Activated CD4-positive, alpha-beta memory T cell treated with anti-CD3 and anti-CD28 coated beads for 36 hours (primary cell): ENCODE measurements at regions of chr6 and their contacts with region 1.

Region 1: GRCh38 chr6:111483736-111484632 is 966 bp upstream of the REV3L start:
- DNase-seq: peak; percentile 92
- H3K4me3 Mint-ChIP-seq: peak overlapping the region; percentile 97
- H3K27ac Mint-ChIP-seq: peak overlapping the region; percentile 99
- H3K4me1 Mint-ChIP-seq: peaks cover 56% of the 10 kb centered on the region
- H3K27me3 Mint-ChIP-seq: no peaks in the 10 kb centered on the region

Region 2: GRCh38 chr6:110873981-110874879 is 609.8 kb before region 1 on chr6 and contains the start of gene AMD1:
- CTCF ChIA-PET with region 1: interaction called, 3 read pairs
- POLR2A ChIA-PET with region 1: no interaction called
- intact Hi-C with region 1: loop called (anchors 2 kb)
- DNase-seq: peak; percentile 96
- H3K4me3 Mint-ChIP-seq: peak within 1 kb of the TSS; percentile 96
- H3K27ac Mint-ChIP-seq: peak within 1 kb of the TSS; percentile 97
- H3K4me1 Mint-ChIP-seq: peaks cover 27% of the 10 kb centered on the region
- H3K27me3 Mint-ChIP-seq: no peaks in the 10 kb centered on the region
- total RNA-seq, gene AMD1: 79.1 to 84.3 TPM

Region 3: GRCh38 chr6:111259089-111259831 is 224.7 kb before region 1 on chr6:
- CTCF ChIA-PET with region 1: interaction called, 52 read pairs
- POLR2A ChIA-PET with region 1: interaction called, 24 read pairs
- intact Hi-C with region 1: loop called (anchors 1 kb)
- DNase-seq: peak; percentile 99
- H3K4me3 Mint-ChIP-seq: peak overlapping the region; percentile 76
- H3K27ac Mint-ChIP-seq: peak overlapping the region; percentile 79
- H3K4me1 Mint-ChIP-seq: peaks cover 31% of the 10 kb centered on the region
- H3K27me3 Mint-ChIP-seq: peaks cover 2% of the 10 kb centered on the region

Region 4: DNA sequence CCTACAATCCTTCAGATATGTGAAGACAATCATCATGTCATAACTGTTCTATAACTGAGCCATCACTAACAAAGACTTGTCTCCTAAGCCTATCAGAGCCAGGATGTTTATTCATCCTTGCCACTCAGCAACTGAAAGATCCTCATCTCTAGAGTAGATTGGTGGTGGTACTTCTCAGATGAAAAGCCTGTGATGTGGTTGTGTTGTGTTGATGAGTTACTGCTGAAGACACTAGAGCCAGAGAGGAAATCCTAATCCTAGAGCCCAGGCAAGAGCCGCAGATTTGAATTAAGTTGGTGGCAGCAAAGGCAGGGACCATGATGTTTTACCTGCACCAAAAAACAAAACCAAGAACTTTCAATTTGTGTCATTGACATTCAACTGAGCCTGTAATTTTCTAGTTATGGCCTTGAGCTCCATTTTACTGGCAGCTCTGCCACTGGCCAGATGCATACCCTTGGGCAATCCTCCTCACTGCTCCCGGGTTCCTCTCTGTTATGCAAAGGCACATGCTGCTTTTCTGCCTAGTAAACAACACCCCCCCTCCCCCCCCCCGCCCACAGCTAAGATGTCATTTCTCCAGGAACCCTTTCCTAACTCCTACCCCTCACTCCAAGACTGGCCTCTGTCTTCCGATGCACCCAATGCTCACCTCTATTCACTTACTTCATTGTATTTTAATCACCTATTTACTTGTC is 49.3 kb after region 1 on chr6:
- CTCF ChIA-PET with region 1: no interaction called
- POLR2A ChIA-PET with region 1: no interaction called
- intact Hi-C with region 1: loop called (anchors 1 kb)
- DNase-seq: peak; percentile 71
- H3K4me3 Mint-ChIP-seq: no peak overlapping the region
- H3K27ac Mint-ChIP-seq: peak overlapping the region; percentile 6
- H3K4me1 Mint-ChIP-seq: peaks cover 26% of the 10 kb centered on the region
- H3K27me3 Mint-ChIP-seq: no peaks in the 10 kb centered on the region

Region 5: GRCh38 chr6:111757342-111757741 is 273.4 kb after region 1 on chr6:
- CTCF ChIA-PET with region 1: no interaction called
- POLR2A ChIA-PET with region 1: interaction called, 3 read pairs
- intact Hi-C with region 1: loop called (anchors 2 kb)
- DNase-seq: peak; percentile 53
- H3K4me3 Mint-ChIP-seq: peak overlapping the region; percentile 84
- H3K27ac Mint-ChIP-seq: peak overlapping the region; percentile 95
- H3K4me1 Mint-ChIP-seq: peaks cover 86% of the 10 kb centered on the region
- H3K27me3 Mint-ChIP-seq: no peaks in the 10 kb centered on the region

Region 6: DNA sequence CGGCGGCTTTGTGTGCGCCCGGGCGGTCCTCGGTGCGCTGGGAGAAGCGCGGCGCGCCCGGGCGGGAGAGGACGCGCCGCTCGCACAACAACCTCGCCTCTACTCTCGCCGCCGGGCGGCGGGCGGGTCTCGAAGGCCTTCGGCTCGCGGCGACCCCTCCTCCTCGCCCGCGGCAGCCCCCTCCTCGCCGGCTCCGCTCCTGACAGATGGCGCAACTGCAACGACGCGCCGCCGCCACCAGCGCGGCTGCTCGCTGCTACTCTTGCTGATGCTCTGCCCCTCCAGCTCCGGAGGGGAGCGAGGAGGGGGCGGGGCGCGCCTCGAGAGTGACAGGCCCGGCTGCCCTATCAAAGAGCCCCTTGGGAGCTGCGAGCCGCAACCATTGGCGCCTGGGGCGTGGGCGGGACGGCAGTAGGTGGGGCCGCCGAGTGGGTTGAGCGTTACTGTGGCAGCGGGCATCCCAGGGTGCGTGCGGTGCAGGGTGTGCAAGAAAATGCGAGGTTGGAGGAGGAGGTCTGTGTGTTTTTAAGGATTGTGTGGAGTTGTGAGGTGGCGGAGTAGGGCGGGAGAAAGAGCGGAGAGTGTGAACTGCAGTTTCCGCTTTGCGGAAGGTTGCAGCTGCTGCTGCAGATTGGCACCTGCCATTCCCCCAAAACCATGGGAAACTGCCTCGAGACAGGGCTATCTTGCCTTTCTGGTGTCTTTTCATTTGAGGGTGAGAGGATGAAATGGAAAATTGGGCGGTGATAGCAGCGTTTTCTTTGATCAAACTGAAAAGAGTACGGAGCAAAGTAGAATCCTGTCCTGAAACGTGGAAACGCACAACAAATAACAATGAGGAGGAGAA is 389.4 kb after region 1 on chr6 and contains the start of gene FYN:
- CTCF ChIA-PET with region 1: no interaction called
- POLR2A ChIA-PET with region 1: no interaction called
- intact Hi-C with region 1: loop called (anchors 1 kb)
- DNase-seq: peak; percentile 99
- H3K4me3 Mint-ChIP-seq: peak within 1 kb of the TSS; percentile 98
- H3K27ac Mint-ChIP-seq: peak within 1 kb of the TSS; percentile 96
- H3K4me1 Mint-ChIP-seq: peaks cover 30% of the 10 kb centered on the region
- H3K27me3 Mint-ChIP-seq: no peaks in the 10 kb centered on the region
- total RNA-seq, gene FYN: 353 to 365 TPM